Caco-2 (cell line): ENCODE measurements at regions of chr5 and their contacts with region 1.

Region 1: GRCh38 chr5:149828161-149828884 is 98.2 kb downstream of the PPARGC1B start:
- DNase-seq: peak; percentile 85 to 89
- H3K4me3 ChIP-seq: no peak overlapping the region
- H3K4me3 Mint-ChIP-seq: no peak overlapping the region
- H3K27ac Mint-ChIP-seq: no peak overlapping the region
- H3K4me1 ChIP-seq: no peaks in the 10 kb centered on the region
- H3K4me1 Mint-ChIP-seq: no peaks in the 10 kb centered on the region
- H3K27me3 ChIP-seq: no peaks in the 10 kb centered on the region
- H3K27me3 Mint-ChIP-seq: no peaks in the 10 kb centered on the region
- CTCF ChIP-seq: peak; percentile 84 to 94

Region 2: DNA sequence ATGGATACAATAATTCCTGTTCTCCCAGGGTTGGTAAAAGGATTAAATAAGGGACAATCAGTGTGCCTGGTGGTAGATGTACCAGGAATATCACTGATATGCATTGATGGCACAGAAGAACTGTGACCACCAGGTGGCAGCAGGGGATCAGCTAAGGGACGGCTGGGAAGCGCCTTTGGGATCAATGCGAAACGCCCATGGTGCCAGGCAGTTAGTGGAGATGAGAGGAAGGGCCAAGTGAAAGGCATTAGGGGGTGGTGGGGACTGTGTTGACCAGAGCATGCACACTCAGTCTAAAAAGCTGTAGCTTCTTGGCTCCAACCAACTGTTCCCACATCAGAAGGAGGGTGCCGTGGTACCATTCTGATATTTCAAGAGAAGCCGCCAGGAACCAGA is 191.5 kb before region 1 on chr5:
- CTCF ChIA-PET with region 1: interaction called, 8 read pairs
- POLR2A ChIA-PET with region 1: no interaction called
- intact Hi-C with region 1: loop called (anchors 1 kb)
- DNase-seq: peak; percentile 89 to 91
- H3K4me3 ChIP-seq: no peak overlapping the region
- H3K4me3 Mint-ChIP-seq: no peak overlapping the region
- H3K27ac Mint-ChIP-seq: no peak overlapping the region
- H3K4me1 ChIP-seq: peaks cover 10% of the 10 kb centered on the region; the same call in 1 of the 2 replicates
- H3K4me1 Mint-ChIP-seq: no peaks in the 10 kb centered on the region
- H3K27me3 ChIP-seq: no peaks in the 10 kb centered on the region
- H3K27me3 Mint-ChIP-seq: no peaks in the 10 kb centered on the region
- CTCF ChIP-seq: peak; percentile 90 to 95

Region 3: GRCh38 chr5:149656576-149657182 is 171.6 kb before region 1 on chr5:
- CTCF ChIA-PET with region 1: interaction called, 8 read pairs
- POLR2A ChIA-PET with region 1: no interaction called
- intact Hi-C with region 1: loop called (anchors 1 kb)
- DNase-seq: peak; percentile 67 to 71
- H3K4me3 ChIP-seq: no peak overlapping the region
- H3K4me3 Mint-ChIP-seq: no peak overlapping the region
- H3K27ac Mint-ChIP-seq: no peak overlapping the region
- H3K4me1 ChIP-seq: no peaks in the 10 kb centered on the region
- H3K4me1 Mint-ChIP-seq: no peaks in the 10 kb centered on the region
- H3K27me3 ChIP-seq: no peaks in the 10 kb centered on the region
- H3K27me3 Mint-ChIP-seq: no peaks in the 10 kb centered on the region
- CTCF ChIP-seq: peak; percentile 82 to 85

Region 4: DNA sequence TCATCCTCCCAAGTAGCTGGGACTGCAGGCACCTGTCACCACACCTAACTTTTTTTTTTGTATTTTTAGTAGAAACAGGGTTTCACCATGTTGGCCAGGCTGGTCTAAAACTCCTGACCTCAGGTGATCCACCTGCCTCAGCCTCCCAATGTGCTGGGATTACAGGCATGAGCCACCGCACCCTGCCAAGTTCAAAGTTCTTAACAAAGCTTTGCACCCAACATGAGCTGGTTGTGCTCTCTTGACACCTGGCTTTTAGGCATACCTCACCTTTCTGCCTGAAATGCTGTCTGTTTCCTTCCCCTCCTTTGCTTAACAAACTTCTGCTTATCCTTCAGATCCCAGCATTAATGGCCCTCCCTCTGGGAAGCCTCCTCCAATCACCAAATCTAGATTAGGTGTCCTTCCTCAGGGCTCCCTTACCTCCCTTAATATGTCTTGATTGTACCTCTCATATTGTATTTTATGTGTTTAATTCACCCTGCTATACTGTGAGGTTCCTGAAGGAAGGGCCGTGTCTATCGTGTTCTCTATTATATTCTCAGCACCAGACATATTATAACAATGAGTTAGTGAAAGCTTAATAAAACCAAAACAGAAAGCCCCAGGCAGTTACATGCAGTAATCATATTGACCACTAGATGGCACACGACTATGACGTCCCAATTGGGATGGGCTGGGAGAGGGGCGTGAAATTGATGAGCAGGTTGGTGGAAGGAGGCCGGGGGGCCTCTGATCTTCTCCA is 161.1 kb before region 1 on chr5:
- CTCF ChIA-PET with region 1: interaction called, 7 read pairs
- POLR2A ChIA-PET with region 1: no interaction called
- intact Hi-C with region 1: loop called (anchors 1 kb)
- DNase-seq: peak in 1 of 2 experiments; percentile 53
- H3K4me3 ChIP-seq: no peak overlapping the region
- H3K4me3 Mint-ChIP-seq: no peak overlapping the region
- H3K27ac Mint-ChIP-seq: no peak overlapping the region
- H3K4me1 ChIP-seq: no peaks in the 10 kb centered on the region
- H3K4me1 Mint-ChIP-seq: no peaks in the 10 kb centered on the region
- H3K27me3 ChIP-seq: no peaks in the 10 kb centered on the region
- H3K27me3 Mint-ChIP-seq: no peaks in the 10 kb centered on the region
- CTCF ChIP-seq: peak; percentile 78 to 89

Region 5: GRCh38 chr5:150409638-150410523 is 581.6 kb after region 1 on chr5:
- CTCF ChIA-PET with region 1: no interaction called
- POLR2A ChIA-PET with region 1: no interaction called
- intact Hi-C with region 1: no loop called
- DNase-seq: peak; percentile 82 to 84
- H3K4me3 ChIP-seq: no peak overlapping the region
- H3K4me3 Mint-ChIP-seq: peak overlapping the region; percentile 60
- H3K27ac Mint-ChIP-seq: peak overlapping the region; percentile 60
- H3K4me1 ChIP-seq: peaks cover 6% of the 10 kb centered on the region
- H3K4me1 Mint-ChIP-seq: peaks cover 7% of the 10 kb centered on the region
- H3K27me3 ChIP-seq: no peaks in the 10 kb centered on the region
- H3K27me3 Mint-ChIP-seq: no peaks in the 10 kb centered on the region
- CTCF ChIP-seq: no peak